Cardiac septum (tissue), 1 donor: ENCODE measurements at regions of chr12 and their contacts with region 1.

Region 1: DNA sequence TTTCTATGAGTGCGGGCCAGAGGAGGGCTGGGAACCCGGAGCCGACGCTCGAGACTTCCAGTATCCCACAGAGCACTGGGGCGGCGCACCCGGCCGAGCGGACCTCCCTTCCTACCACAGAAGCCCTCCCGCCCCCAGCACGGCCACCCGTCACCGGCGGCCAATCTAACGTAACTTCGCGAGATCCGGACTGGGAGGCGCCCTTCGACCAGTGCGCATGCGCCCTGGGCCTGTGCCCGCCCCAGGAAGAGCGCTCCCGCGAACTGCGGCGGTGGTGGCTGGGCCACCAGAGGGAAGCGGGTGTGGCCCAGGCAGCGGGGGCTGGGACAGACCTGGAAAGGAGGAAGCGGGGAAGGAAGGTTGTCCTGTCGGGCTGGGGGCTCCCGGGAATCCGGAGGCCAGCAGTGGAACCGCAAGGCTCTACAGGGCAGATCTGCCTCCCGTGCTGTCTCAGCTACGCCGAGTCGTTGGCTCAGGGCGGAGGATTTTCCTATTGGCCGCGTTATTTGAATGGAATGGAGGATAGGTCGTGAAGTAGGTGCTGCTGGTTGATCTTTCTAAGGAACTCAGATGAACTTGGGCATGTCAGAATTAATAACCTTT is at the start of gene PPP1R12A:
- DNase-seq: peak; percentile 99
- total RNA-seq, gene PPP1R12A: 63.3 TPM

Region 2: DNA sequence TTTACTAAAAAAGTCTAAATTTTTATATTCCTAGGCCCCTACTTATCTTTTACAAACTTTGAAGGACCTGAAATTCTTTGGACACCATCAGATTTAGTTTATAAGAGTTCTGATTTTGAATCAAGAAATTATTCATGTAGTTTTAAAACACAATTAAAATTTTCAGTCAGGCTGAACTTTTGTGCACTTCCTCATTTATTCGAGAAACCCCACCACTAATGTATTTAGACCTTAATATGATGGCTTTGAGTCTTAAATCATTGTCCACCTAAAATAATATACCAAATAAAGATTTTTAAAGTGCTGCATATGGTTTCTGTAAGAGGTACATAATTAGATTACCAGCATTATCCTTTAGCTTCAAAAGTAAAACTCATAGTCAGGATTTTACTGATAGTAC is 347.8 kb before region 1 on chr12:
- intact Hi-C with region 1: no loop called
- DNase-seq: no peak

Region 3: DNA sequence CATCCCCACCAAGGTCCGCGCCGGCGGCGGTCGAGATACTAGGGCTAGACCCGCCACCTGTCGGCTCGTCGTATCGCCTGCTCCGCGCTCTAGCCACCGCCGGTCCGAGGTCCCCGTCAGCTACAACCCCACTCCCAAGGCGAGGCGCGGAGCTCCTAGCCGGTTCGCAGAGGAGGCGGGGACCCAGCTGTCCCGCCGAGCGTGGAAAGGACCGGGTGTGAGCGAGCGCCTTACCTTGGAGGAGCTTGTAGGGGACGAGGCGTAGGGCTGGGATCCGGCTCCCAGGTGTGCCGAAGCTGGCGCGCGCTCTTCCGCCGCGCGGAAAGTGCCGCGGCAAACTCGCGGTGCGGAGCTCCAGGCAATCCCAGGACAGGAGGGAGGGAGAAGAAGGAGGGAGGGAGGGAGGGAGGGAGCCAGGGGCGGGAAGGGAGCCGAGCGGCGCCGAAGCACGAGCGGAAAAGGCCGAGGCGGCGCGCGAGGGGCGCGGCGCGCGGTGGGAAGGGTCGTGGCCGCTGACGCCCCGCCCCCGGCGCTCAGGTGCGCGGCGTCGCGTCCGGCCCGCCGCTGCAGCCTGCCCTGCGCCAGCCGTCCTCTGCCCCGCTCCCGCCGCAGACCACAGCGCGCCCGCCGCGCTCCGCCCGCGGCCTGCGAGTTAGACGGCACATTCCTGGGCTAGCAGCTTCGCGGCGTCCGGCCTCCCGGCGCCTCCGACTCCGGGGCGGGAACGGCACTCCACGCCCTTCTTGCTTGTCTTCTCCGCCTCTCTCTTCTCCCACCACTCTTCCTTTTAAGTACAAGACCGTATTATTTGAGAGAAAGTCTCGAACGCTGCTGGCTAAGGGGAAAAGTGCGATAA is 244.3 kb before region 1 on chr12 and contains the start of gene PAWR:
- intact Hi-C with region 1: loop called (anchors 10 kb)
- DNase-seq: no peak
- total RNA-seq, gene PAWR: 6.6 TPM

Region 4: GRCh38 chr12:79818856-79819255 is 116.3 kb before region 1 on chr12:
- intact Hi-C with region 1: loop called (anchors 10 kb)
- DNase-seq: no peak

Region 5: GRCh38 chr12:79886917-79887519 is 48.1 kb before region 1 on chr12:
- intact Hi-C with region 1: loop called (anchors 5 kb)
- DNase-seq: no peak

Region 6: GRCh38 chr12:80186727-80187217 is 251.7 kb after region 1 on chr12:
- intact Hi-C with region 1: loop called (anchors 1 kb)
- DNase-seq: no peak

Region 7: GRCh38 chr12:80241576-80242273 is 306.6 kb after region 1 on chr12:
- intact Hi-C with region 1: no loop called
- DNase-seq: no peak